Sigmoid colon (tissue), 7 donors: ENCODE measurements at regions of chr2 and their contacts with region 1.

Region 1: GRCh38 chr2:68441179-68441993 is 25.7 kb downstream of the FBXO48 start:
- DNase-seq: peak; percentile 93
- H3K4me3 ChIP-seq: no peak overlapping the region
- H3K27ac ChIP-seq: peak overlapping the region in 3 of 4 donors; percentile 12 to 55 (median 40)
- H3K4me1 ChIP-seq: peaks cover 0 to 22% (median 14%) of the 10 kb centered on the region in 4 donors
- H3K27me3 ChIP-seq: no peaks in the 10 kb centered on the region
- CTCF ChIP-seq: peak; percentile 81 to 94 (median 89)
- EP300 ChIP-seq: no peak
- POLR2A ChIP-seq: no peak

Region 2: DNA sequence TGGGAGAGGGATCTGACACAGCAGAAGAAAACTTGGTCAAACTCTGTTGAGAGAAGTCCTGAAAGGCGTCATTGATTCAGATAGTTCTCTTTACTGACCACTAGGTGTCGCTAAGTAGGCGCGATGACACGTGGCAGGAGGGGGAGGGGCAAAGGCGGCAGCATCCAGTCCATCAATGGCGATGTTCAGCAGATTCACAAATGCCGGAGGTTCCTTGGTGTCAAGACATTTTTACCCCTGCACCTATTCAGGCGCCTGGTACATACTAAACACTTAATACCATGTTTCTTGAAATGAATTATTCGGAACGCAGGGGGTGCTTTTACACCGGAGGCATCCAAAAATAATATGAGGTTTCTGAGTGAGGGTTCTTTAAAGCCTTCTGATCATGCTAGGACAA is 79.3 kb before region 1 on chr2:
- intact Hi-C with region 1: loop called (anchors 1 kb)
- DNase-seq: peak; percentile 86
- H3K4me3 ChIP-seq: no peak overlapping the region
- H3K27ac ChIP-seq: no peak overlapping the region
- H3K4me1 ChIP-seq: peaks cover 0 to 4% (median 0%) of the 10 kb centered on the region in 4 donors
- H3K27me3 ChIP-seq: no peaks in the 10 kb centered on the region
- CTCF ChIP-seq: peak; percentile 47 to 89 (median 68)
- EP300 ChIP-seq: no peak
- POLR2A ChIP-seq: no peak

Region 3: DNA sequence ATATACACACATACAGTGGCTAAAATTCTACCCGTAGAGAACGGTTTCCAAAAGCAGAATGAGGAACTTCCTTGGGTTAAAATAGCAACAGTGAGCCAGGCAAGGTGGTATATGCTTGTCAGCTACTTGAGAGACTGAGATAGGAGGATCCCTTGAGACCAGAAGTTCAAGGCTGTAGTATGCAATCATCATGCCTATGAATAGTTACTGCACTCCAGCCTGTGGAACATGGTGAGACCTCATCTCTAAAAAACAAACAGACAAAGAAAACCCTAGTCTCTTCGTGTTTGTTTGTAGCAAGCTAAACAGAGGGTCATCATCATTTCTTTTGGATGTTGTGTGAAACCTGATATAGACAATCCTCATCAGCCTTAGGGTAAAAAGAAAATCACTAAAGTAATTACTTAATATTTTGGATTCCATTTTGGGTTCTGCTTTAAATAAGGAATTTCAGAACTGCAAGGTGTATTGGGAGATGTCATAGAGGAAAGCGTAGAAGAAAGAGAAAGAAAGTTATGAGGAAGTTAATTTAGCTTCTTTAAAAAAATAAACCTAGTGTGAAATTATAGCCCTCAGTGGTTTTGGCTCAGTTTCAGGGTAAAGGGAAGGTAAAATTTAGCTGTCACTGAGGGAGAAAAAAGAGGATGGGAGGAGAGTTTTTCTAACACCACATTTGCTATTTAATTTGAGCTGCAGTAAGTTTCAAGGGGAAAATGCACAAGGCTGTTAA is 29.8 kb before region 1 on chr2:
- intact Hi-C with region 1: no loop called
- DNase-seq: no peak
- H3K4me3 ChIP-seq: no peak overlapping the region
- H3K27ac ChIP-seq: no peak overlapping the region
- H3K4me1 ChIP-seq: no peaks in the 10 kb centered on the region
- H3K27me3 ChIP-seq: no peaks in the 10 kb centered on the region
- CTCF ChIP-seq: no peak
- EP300 ChIP-seq: no peak
- POLR2A ChIP-seq: no peak